ENCODE measurements at regions of chr3 and their contacts with region 1.

Region 1: GRCh38 chr3:159732172-159733111 is 256.2 kb upstream of the IL12A start:
- DNase-seq: peak; percentile 69 to 70
- H3K4me3 ChIP-seq: peak overlapping the region; percentile 40
- H3K4me3 Mint-ChIP-seq: peak overlapping the region; percentile 95
- H3K27ac Mint-ChIP-seq: peak overlapping the region; percentile 80
- H3K4me1 ChIP-seq: peaks cover 45% of the 10 kb centered on the region
- H3K4me1 Mint-ChIP-seq: peaks cover 23% of the 10 kb centered on the region
- H3K27me3 ChIP-seq: no peaks in the 10 kb centered on the region
- H3K27me3 Mint-ChIP-seq: no peaks in the 10 kb centered on the region
- CTCF ChIP-seq: peak in 1 of 2 experiments; percentile 21

Region 2: DNA sequence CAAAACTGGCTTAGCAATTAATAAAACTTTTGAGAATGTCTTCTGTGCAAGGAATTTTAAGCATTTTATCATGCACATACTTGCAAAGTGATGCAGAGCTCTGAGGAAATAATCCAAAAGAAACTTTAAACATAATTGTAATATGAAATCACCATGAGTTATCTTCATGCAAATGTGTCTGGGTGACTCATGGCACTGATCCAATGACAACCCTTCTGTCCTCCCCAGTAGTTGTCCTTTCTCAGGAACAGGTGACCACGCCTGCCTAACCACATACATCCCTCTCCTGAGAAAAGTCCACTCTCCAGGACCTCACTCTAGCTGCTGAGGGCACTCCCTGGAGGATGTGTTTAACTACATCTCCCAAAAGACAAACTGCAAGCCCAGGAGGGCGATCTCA is 274.4 kb before region 1 on chr3:
- CTCF ChIA-PET with region 1: no interaction called
- POLR2A ChIA-PET with region 1: no interaction called
- intact Hi-C with region 1: loop called (anchors 10 kb)
- DNase-seq: peak; percentile 4 to 31
- H3K4me3 ChIP-seq: no peak overlapping the region
- H3K4me3 Mint-ChIP-seq: no peak overlapping the region
- H3K27ac Mint-ChIP-seq: no peak overlapping the region
- H3K4me1 ChIP-seq: no peaks in the 10 kb centered on the region
- H3K4me1 Mint-ChIP-seq: no peaks in the 10 kb centered on the region
- H3K27me3 ChIP-seq: no peaks in the 10 kb centered on the region
- H3K27me3 Mint-ChIP-seq: peaks cover 6% of the 10 kb centered on the region
- CTCF ChIP-seq: no peak

Region 3: GRCh38 chr3:159513867-159514380 is 218.5 kb before region 1 on chr3:
- CTCF ChIA-PET with region 1: no interaction called
- POLR2A ChIA-PET with region 1: no interaction called
- intact Hi-C with region 1: no loop called
- DNase-seq: no peak
- H3K4me3 ChIP-seq: no peak overlapping the region
- H3K4me3 Mint-ChIP-seq: no peak overlapping the region
- H3K27ac Mint-ChIP-seq: no peak overlapping the region
- H3K4me1 ChIP-seq: no peaks in the 10 kb centered on the region
- H3K4me1 Mint-ChIP-seq: peaks cover 7% of the 10 kb centered on the region
- H3K27me3 ChIP-seq: no peaks in the 10 kb centered on the region
- H3K27me3 Mint-ChIP-seq: peaks cover 16% of the 10 kb centered on the region
- CTCF ChIP-seq: no peak

Region 4: DNA sequence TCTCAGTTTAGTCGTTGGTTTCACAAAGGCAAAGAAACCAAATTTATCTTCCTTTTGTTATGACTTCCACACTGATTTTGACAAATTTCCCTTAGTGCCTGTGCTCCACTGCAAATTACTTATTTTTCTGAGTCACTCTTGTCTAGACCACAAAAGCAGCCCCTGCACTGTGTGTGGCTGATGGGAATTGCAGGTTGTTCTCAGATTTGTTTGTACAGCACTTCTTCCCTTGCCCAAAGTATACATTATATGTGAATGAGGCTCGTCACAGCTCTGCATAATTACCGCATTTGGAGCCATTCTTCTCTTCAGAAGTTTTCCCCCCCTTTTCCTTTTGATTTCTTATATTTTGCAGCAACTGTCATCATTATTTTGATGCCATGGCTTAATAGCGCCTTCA is 98.0 kb before region 1 on chr3:
- CTCF ChIA-PET with region 1: interaction called, 6 read pairs
- POLR2A ChIA-PET with region 1: no interaction called
- intact Hi-C with region 1: loop called (anchors 1 kb)
- DNase-seq: no peak
- H3K4me3 ChIP-seq: no peak overlapping the region
- H3K4me3 Mint-ChIP-seq: peak overlapping the region; percentile 37
- H3K27ac Mint-ChIP-seq: peak overlapping the region; percentile 65
- H3K4me1 ChIP-seq: peaks cover 54% of the 10 kb centered on the region
- H3K4me1 Mint-ChIP-seq: peaks cover 44% of the 10 kb centered on the region
- H3K27me3 ChIP-seq: no peaks in the 10 kb centered on the region
- H3K27me3 Mint-ChIP-seq: no peaks in the 10 kb centered on the region
- CTCF ChIP-seq: no peak

Region 5: GRCh38 chr3:159657176-159657575 is 75.3 kb before region 1 on chr3:
- CTCF ChIA-PET with region 1: no interaction called
- POLR2A ChIA-PET with region 1: no interaction called
- intact Hi-C with region 1: no loop called
- DNase-seq: no peak
- H3K4me3 ChIP-seq: no peak overlapping the region
- H3K4me3 Mint-ChIP-seq: no peak overlapping the region
- H3K27ac Mint-ChIP-seq: no peak overlapping the region
- H3K4me1 ChIP-seq: no peaks in the 10 kb centered on the region
- H3K4me1 Mint-ChIP-seq: peaks cover 6% of the 10 kb centered on the region
- H3K27me3 ChIP-seq: no peaks in the 10 kb centered on the region
- H3K27me3 Mint-ChIP-seq: no peaks in the 10 kb centered on the region
- CTCF ChIP-seq: no peak

Region 6: GRCh38 chr3:159679900-159680299 is 52.5 kb before region 1 on chr3:
- CTCF ChIA-PET with region 1: no interaction called
- POLR2A ChIA-PET with region 1: no interaction called
- intact Hi-C with region 1: loop called (anchors 2 kb)
- DNase-seq: no peak
- H3K4me3 ChIP-seq: no peak overlapping the region
- H3K4me3 Mint-ChIP-seq: no peak overlapping the region
- H3K27ac Mint-ChIP-seq: peak overlapping the region; percentile 57
- H3K4me1 ChIP-seq: peaks cover 32% of the 10 kb centered on the region
- H3K4me1 Mint-ChIP-seq: peaks cover 26% of the 10 kb centered on the region
- H3K27me3 ChIP-seq: no peaks in the 10 kb centered on the region
- H3K27me3 Mint-ChIP-seq: no peaks in the 10 kb centered on the region
- CTCF ChIP-seq: no peak

Region 7: GRCh38 chr3:159763602-159764489 is 31.4 kb after region 1 on chr3:
- CTCF ChIA-PET with region 1: no interaction called
- POLR2A ChIA-PET with region 1: interaction called, 13 read pairs
- intact Hi-C with region 1: loop called (anchors 1 kb)
- DNase-seq: peak; percentile 91
- H3K4me3 ChIP-seq: peak overlapping the region; percentile 79
- H3K4me3 Mint-ChIP-seq: peak overlapping the region; percentile 87
- H3K27ac Mint-ChIP-seq: peak overlapping the region; percentile 84
- H3K4me1 ChIP-seq: peaks cover 31% of the 10 kb centered on the region
- H3K4me1 Mint-ChIP-seq: peaks cover 28% of the 10 kb centered on the region
- H3K27me3 ChIP-seq: no peaks in the 10 kb centered on the region
- H3K27me3 Mint-ChIP-seq: no peaks in the 10 kb centered on the region
- CTCF ChIP-seq: peak in 1 of 2 experiments; percentile 17

Region 8: DNA sequence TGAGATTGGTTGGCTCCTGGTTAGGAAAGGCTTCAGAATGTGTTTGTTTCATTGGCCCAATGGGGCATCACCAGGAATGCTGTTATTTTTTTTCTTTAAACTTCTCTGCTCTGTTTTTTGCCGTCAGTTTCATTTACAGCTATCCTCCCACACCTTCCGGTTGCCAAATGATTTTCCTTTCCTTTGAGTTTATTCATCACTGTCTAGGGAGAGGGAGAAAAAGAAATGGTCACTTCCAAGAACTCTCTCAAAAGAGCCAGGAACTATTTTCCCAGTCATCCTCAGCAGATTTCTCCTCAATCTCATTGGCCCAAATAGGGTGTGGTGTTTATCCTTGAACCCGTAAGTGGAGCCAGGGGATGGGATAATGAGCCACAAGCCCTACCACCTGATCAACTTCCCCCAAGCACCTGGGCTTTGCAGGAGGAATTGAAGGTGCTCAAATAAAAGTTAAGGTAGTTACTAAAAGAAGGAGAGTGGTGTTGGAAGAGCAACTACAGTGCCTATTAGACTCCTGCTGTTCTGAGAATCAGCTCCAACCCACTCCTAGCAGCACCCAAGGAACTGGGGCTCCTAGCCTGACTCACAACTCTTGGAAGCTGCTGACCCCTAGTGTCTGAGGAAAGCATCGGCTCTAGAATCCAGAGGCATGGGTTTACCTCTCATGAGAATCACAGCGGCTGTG is 72.4 kb after region 1 on chr3:
- CTCF ChIA-PET with region 1: interaction called, 11 read pairs
- POLR2A ChIA-PET with region 1: interaction called, 3 read pairs
- intact Hi-C with region 1: loop called (anchors 1 kb)
- DNase-seq: peak; percentile 84
- H3K4me3 ChIP-seq: no peak overlapping the region
- H3K4me3 Mint-ChIP-seq: no peak overlapping the region
- H3K27ac Mint-ChIP-seq: no peak overlapping the region
- H3K4me1 ChIP-seq: peaks cover 38% of the 10 kb centered on the region
- H3K4me1 Mint-ChIP-seq: peaks cover 12% of the 10 kb centered on the region
- H3K27me3 ChIP-seq: no peaks in the 10 kb centered on the region
- H3K27me3 Mint-ChIP-seq: no peaks in the 10 kb centered on the region
- CTCF ChIP-seq: peak; percentile 84 to 94

Region 9: DNA sequence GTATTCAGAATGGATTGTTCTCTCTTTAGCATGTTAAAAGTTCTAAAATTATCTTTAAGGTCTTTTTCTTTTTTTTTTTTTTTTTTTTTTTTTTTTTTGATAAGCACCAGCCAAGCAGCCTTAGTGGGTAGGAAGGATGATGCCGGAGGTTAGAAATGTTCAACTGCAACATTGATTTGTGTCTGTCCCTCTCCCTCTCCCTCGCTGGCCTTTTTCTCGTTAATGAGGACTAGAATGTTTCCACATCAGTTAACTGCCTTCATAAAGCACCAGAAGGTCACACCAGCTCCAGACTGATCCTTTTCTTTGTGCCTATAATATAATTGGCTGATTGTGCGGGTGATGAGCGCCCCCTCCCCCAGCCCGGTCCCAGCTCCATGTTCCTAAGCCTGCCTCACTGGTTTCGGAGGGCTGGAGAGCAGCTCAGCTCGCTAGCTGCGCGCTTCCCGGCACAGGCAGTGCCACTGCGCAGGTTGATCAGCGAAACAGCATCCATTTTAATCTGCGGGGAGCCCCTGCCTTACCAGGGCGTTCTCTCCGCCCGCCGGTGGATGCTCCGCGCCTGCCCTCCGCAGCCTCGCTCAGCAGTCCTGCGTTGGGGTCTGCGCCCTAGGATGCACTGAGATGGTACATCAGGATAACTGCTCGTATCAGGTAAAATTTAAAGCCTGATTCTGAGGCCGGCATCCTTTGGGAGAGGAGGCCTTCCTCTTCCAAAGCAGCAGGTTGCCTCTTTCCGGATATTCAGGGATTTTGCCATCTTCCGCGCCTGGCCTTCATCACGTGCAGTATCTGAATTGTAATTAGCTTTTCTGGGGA is 107.3 kb after region 1 on chr3:
- CTCF ChIA-PET with region 1: no interaction called
- POLR2A ChIA-PET with region 1: no interaction called
- intact Hi-C with region 1: no loop called
- DNase-seq: no peak
- H3K4me3 ChIP-seq: no peak within 1 kb of the TSS
- H3K4me3 Mint-ChIP-seq: no peak within 1 kb of the TSS
- H3K27ac Mint-ChIP-seq: no peak within 1 kb of the TSS
- H3K4me1 ChIP-seq: no peaks in the 10 kb centered on the region; the same call in 1 of the 2 replicates
- H3K4me1 Mint-ChIP-seq: no peaks in the 10 kb centered on the region
- H3K27me3 ChIP-seq: no peaks in the 10 kb centered on the region
- H3K27me3 Mint-ChIP-seq: no peaks in the 10 kb centered on the region
- CTCF ChIP-seq: no peak